CD14-positive monocyte (primary cell): ENCODE measurements at regions of chr20 and their contacts with region 1.

Region 1: GRCh38 chr20:55755411-55755810 is 249.9 kb downstream of the CBLN4 start:
- DNase-seq: no peak
- H3K4me3 ChIP-seq: no peak overlapping the region
- H3K4me3 Mint-ChIP-seq: no peak overlapping the region
- H3K27ac ChIP-seq: no peak overlapping the region
- H3K27ac Mint-ChIP-seq: no peak overlapping the region
- H3K4me1 ChIP-seq: no peaks in the 10 kb centered on the region
- H3K4me1 Mint-ChIP-seq: no peaks in the 10 kb centered on the region
- H3K27me3 ChIP-seq: no peaks in the 10 kb centered on the region
- H3K27me3 Mint-ChIP-seq: no peaks in the 10 kb centered on the region
- CTCF ChIP-seq: no peak

Region 2: DNA sequence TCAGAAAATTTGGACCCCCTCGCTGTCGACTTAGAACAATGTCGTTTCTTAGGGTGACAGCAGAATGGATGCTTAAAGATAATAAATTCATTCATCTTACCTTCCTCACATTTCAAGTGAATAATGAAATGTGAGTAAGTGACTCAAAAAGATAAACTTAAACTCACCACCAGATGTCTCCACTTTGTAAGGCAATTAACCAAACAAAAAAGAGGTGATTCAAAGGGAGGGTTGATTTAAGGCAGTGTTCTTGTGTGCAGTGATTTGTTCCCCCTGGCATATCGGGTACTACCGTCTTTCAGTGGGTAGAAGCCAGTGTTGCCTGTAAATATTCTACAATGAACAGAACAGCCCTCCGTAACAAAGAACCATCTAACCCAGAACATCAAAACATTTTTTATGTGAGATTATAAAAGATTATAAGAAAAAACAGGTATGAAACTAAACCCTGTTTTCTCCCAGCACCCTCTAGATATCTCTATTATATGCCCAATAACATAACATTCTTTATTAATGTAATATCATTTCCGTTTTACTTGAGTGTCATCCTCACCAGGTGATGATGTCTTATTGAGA is 339.8 kb before region 1 on chr20:
- intact Hi-C with region 1: no loop called
- DNase-seq: no peak
- H3K4me3 ChIP-seq: no peak overlapping the region
- H3K4me3 Mint-ChIP-seq: no peak overlapping the region
- H3K27ac ChIP-seq: no peak overlapping the region
- H3K27ac Mint-ChIP-seq: no peak overlapping the region
- H3K4me1 ChIP-seq: no peaks in the 10 kb centered on the region
- H3K4me1 Mint-ChIP-seq: no peaks in the 10 kb centered on the region
- H3K27me3 ChIP-seq: no peaks in the 10 kb centered on the region
- H3K27me3 Mint-ChIP-seq: no peaks in the 10 kb centered on the region
- CTCF ChIP-seq: no peak

Region 3: DNA sequence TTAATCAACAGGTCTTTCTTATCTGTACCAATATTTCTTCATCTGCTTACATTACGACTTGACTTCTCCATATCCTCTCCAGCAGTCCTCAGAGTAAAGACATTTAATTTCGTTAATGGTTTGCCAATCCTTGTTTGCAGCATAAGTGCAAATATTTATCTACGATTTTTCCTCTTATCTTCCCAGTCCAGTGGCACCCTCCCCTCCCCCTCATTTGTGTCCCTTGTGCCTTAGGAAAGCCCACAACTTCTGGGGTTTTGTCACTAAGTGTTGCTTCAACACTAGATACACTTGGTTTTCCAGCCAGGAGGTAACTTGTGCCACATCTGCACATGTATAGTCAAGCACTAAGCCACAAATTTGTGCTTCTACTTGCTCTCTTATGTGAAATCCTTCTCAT is 77.3 kb before region 1 on chr20:
- intact Hi-C with region 1: no loop called
- DNase-seq: no peak
- H3K4me3 ChIP-seq: no peak overlapping the region
- H3K4me3 Mint-ChIP-seq: no peak overlapping the region
- H3K27ac ChIP-seq: no peak overlapping the region
- H3K27ac Mint-ChIP-seq: no peak overlapping the region
- H3K4me1 ChIP-seq: no peaks in the 10 kb centered on the region
- H3K4me1 Mint-ChIP-seq: no peaks in the 10 kb centered on the region
- H3K27me3 ChIP-seq: no peaks in the 10 kb centered on the region
- H3K27me3 Mint-ChIP-seq: no peaks in the 10 kb centered on the region
- CTCF ChIP-seq: no peak

Region 4: GRCh38 chr20:55693641-55694040 is 61.8 kb before region 1 on chr20:
- intact Hi-C with region 1: loop called in 1 of 2 experiments (anchors 10 kb)
- DNase-seq: no peak
- H3K4me3 ChIP-seq: no peak overlapping the region
- H3K4me3 Mint-ChIP-seq: no peak overlapping the region
- H3K27ac ChIP-seq: no peak overlapping the region
- H3K27ac Mint-ChIP-seq: no peak overlapping the region
- H3K4me1 ChIP-seq: no peaks in the 10 kb centered on the region
- H3K4me1 Mint-ChIP-seq: no peaks in the 10 kb centered on the region
- H3K27me3 ChIP-seq: no peaks in the 10 kb centered on the region
- H3K27me3 Mint-ChIP-seq: no peaks in the 10 kb centered on the region
- CTCF ChIP-seq: no peak